ENCODE measurements at regions of chr2 and their contacts with region 1.

Region 1: GRCh38 chr2:43219383-43220228 is 6.8 kb downstream of the ZFP36L2 start:
- DNase-seq: no peak
- H3K4me3 ChIP-seq: peak overlapping the region; percentile 86
- CTCF ChIP-seq: no peak

Region 2: GRCh38 chr2:42964439-42965083 is 255.0 kb before region 1 on chr2:
- CTCF ChIA-PET with region 1: interaction called, 248 read pairs
- POLR2A ChIA-PET with region 1: interaction called, 16 read pairs
- DNase-seq: peak; percentile 81
- H3K4me3 ChIP-seq: no peak overlapping the region
- CTCF ChIP-seq: no peak

Region 3: DNA sequence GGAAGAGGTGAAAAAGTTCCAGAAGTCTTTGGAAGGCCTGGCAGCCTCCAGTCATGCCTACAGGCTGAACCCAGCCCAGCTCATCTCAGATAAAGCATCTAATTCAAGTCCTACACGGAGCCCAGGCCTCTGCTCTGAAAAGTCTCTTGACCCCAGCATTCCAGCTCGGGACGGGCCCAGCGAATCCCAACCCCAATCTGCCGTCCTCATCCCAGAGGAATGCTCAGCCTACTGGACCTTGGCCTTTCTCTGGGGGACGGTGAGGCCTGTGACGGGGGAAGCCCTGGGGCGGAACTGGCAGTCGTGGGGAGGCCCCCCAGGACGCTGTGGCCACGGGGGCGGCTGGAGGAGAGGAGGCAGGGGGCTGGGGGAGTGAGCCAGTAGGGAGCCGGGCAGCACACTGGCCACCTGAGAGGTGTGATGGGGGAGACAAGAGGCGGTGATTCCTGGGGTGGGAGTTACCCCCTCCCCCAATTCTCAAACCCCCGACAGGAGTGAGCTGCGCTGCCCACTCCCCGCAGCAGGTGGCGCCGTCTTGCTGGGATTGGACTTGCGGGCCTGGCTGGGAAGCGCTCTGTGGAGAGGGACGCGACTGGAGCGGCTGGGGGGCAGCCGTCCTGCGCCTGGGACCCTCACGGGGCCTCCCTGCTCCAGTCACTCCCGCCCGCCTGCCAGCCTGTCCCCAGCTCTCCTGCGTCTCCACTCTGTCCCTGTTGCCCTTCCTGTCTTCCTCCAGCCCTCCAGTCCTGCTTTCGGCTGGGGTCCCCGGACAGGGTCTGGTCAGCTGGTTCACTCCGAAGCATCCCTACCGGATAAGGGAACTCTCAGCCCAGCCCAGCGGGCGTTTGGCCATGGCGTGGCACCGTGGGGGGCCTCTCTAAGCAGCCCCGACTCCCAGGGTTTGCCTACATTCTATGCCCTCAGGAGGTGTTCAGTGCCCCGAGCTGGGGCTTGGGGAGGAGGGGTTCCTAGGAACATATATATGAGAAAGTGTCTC is 244.6 kb before region 1 on chr2:
- CTCF ChIA-PET with region 1: interaction called, 248 read pairs
- POLR2A ChIA-PET with region 1: interaction called, 16 read pairs
- DNase-seq: no peak
- H3K4me3 ChIP-seq: peak overlapping the region; percentile 48
- CTCF ChIP-seq: peak; percentile 99

Region 4: GRCh38 chr2:43024515-43025011 is 195.0 kb before region 1 on chr2:
- CTCF ChIA-PET with region 1: interaction called, 11 read pairs
- POLR2A ChIA-PET with region 1: no interaction called
- DNase-seq: no peak
- H3K4me3 ChIP-seq: no peak overlapping the region
- CTCF ChIP-seq: peak; percentile 98

Region 5: DNA sequence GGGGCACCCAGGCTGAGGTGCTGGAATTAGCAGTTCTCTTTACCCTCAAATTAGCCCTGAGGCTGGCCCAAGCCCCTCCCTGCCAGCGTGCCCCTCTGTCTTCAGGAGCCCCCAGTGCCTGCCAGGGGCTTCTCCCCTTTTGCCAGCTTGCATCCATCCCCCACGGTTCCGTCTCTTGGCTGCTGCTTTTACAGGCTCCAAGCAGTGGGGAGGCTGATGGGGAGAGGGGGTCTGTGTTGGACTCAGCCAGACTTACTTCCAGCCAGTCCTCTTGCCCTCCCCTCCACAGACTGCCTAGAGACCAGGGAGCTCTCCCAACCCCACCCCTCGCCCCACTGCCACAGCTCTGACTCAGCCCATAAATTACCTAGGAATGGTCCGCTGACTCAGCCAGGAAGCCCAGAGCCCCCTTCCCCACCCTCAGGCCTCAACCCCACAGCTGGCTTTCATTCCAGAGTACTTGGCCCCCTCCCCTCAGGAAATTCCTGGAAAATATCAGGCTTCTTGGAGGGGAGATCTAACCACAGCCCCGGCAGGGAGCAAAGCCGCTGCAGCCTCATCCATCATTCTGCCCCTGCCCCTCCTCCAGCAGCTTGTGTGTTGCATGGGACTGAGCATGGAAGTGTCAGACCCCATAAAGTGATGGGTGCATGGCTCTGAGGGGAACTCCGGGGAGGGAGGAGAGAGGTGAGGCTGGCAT is 177.8 kb before region 1 on chr2:
- CTCF ChIA-PET with region 1: interaction called, 4 read pairs
- POLR2A ChIA-PET with region 1: interaction called, 17 read pairs
- DNase-seq: peak; percentile 71
- H3K4me3 ChIP-seq: no peak overlapping the region
- CTCF ChIP-seq: no peak

Region 6: GRCh38 chr2:43174368-43174916 is 45.2 kb before region 1 on chr2:
- CTCF ChIA-PET with region 1: no interaction called
- POLR2A ChIA-PET with region 1: no interaction called
- DNase-seq: no peak
- H3K4me3 ChIP-seq: no peak overlapping the region
- CTCF ChIP-seq: no peak

Measured in AG04449 (cell line).